ENCODE measurements at regions of chr17 and their contacts with region 1.

Region 1: DNA sequence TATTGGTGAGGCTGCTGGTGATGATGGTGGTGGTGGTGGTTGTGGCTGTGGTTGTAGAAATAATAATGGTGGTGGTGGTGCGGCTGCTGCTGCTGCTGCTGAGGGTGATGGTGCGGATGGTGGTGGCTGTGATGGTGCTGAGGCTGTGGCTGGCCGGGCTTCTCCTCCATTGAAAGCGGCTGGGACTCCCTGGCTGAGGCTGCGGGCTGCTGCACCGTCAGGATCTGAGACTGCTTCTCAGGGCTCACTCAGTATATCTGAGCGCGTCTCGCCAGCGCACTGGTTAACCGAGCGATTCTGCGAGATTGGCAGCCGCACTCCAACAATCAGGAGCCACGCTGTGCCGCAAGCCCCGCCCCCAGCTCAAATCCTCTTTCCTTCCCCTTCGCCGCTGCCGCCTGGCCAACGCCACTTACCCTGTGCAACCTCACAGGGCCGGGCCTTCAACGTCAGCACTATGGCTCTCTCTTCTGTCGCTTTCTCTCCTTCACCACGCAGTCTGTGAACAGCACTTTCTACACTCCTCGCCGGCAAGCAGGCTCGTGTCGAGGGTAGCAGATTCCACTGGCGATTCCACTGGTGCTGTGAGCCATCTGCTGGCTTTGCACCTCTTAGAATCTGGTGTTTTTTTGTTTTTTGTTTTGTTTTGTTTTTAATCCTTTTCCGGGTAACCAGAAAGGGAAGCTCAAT is at the start of gene NUFIP2:
- DNase-seq: peak; percentile 97
- H3K27ac ChIP-seq: peak within 1 kb of the TSS; percentile 98
- CTCF ChIP-seq: no peak

Region 2: DNA sequence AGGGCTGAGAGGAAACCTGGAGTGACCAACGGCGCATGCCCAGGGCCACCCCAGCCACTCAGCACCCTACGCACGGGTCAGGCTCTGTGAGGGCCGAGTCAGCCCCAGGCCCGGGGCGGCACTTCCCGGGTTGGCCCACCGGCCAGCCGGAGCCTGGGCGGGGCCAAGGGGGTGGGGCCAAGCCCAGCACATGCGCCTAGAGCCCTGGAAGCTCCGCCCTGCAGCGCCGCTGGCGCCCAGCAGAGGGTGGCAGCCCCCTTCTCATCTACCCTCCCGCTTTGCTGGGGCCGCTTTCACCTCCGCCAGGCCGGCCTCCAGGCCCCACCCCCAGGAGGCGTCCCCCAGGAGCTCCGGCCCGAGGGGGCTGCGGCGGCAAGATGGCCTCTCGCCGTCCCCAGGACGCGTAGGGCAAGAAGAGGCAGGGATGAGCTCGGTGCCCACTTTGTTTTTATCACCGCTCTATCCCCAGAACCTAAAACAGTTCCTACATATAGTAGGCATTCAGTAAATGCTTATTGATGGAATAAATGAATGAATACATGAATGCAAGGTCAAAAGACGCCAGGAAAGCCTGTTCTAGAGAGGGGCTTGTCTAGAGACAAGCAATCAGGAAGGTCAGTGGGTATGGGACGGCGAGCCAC is 145.1 kb before region 1 on chr17:
- CTCF ChIA-PET with region 1: interaction called, 22 read pairs
- POLR2A ChIA-PET with region 1: no interaction called
- DNase-seq: peak; percentile 89
- H3K27ac ChIP-seq: peak overlapping the region; percentile 97
- CTCF ChIP-seq: peak; percentile 92

Region 3: DNA sequence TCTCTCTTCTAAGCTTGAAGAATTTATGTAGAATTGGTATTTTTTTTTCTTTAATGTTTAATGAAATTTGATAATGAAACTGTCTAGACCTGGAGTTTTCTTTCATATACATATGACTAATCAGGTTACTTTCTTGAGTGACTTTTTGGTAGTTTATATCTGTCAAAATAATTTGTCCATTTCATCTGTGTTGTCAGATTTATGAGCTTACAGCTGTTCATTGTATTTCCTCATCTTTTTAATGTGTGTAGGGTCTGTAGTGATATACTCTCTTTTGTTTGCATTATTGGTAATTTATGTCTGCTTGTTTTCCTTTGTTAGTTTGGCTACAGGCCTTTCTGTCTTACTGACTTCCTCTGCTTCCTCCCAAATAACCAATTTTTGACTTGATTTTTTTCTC is 151.8 kb after region 1 on chr17:
- CTCF ChIA-PET with region 1: no interaction called
- POLR2A ChIA-PET with region 1: interaction called, 16 read pairs
- DNase-seq: no peak
- H3K27ac ChIP-seq: no peak overlapping the region
- CTCF ChIP-seq: no peak

Measured in RWPE1 (cell line).